Left cardiac atrium (tissue), 4 donors: ENCODE measurements at regions of chr9 and their contacts with region 1.

Region 1: GRCh38 chr9:121861501-121862180 is 210.2 kb downstream of the DAB2IP start:
- DNase-seq: no peak
- ATAC-seq: peak; percentile 77 to 85

Region 2: GRCh38 chr9:121698627-121699570 is 162.7 kb before region 1 on chr9:
- intact Hi-C with region 1: loop called (anchors 10 kb)
- DNase-seq: peak; percentile 77
- ATAC-seq: peak; percentile 51 to 60

Region 3: DNA sequence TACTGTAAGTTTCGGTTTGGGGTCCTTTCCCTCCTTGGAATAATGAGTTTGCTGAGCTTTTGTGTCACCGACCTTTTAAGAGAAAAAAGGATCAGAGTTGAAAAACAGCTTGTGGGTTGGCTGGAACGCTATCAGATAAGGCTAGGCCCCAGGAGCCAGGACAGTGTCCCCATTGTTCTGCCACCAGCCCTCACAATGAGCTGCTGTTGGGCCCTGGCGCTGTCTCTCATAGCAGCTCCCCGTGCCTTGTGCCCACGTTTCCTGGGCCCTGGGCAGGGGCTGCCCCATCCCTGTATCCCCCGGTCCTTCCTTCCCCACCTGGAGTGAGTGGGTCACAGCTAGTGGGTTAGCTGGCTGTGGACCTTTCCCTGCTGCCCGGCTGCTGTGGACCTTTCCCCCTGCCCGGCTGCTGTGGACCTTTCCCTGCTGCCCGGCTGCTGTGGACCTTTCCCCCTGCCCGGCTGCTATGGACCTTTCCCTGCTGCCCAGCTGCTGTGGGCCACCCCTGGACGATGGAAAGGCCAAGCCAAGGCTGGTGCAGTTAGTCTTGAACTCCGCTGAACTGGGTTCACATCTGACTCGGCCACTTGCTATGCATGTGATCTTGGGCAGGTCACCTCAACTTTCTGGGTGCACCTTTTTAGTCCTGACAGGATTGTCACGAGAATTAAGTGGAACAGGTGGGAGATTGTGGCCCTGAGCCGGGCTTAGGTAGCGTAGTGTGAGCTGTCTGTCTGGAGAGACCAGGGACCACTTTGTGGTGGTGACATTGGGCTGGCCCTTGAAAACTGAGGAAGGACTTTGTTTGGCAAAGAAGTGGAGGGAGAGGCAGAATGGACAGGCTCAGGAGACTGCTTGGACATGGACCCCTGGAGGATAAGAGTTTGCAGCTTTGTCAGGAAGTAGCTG is 110.7 kb before region 1 on chr9:
- intact Hi-C with region 1: loop called in 1 of 2 experiments (anchors 10 kb)
- DNase-seq: no peak
- ATAC-seq: no peak

Region 4: GRCh38 chr9:122190609-122191381 is 329.2 kb after region 1 on chr9:
- intact Hi-C with region 1: no loop called
- DNase-seq: no peak
- ATAC-seq: no peak